Heart right ventricle (tissue), 16 donors: ENCODE measurements at regions of chr2 and their contacts with region 1.

Region 1: GRCh38 chr2:40448468-40449079 is 3.3 kb downstream of the SLC8A1 start:
- DNase-seq: no peak
- ATAC-seq: peak in 1 of 8 donors; percentile 26
- H3K4me3 ChIP-seq: no peak overlapping the region
- H3K27ac ChIP-seq: peak overlapping the region in 4 of 10 donors; percentile 3 to 87 (median 29)
- H3K4me1 ChIP-seq: peaks cover 0 to 79% (median 54%) of the 10 kb centered on the region in 9 donors
- H3K27me3 ChIP-seq: no peaks in the 10 kb centered on the region
- CTCF ChIP-seq: peak in 8 of 9 donors; percentile 22 to 68 (median 57)

Region 2: GRCh38 chr2:39975476-39976020 is 473.0 kb before region 1 on chr2:
- intact Hi-C with region 1: no loop called
- DNase-seq: no peak
- ATAC-seq: peak in 1 of 8 donors; percentile 28
- H3K4me3 ChIP-seq: no peak overlapping the region
- H3K27ac ChIP-seq: peak overlapping the region in 3 of 10 donors; percentile 1 to 35 (median 17)
- H3K4me1 ChIP-seq: peaks cover 0 to 5% (median 0%) of the 10 kb centered on the region in 9 donors
- H3K27me3 ChIP-seq: no peaks in the 10 kb centered on the region
- CTCF ChIP-seq: no peak

Region 3: GRCh38 chr2:40281021-40281940 is 167.3 kb before region 1 on chr2:
- intact Hi-C with region 1: loop called in 1 of 10 experiments (anchors 10 kb)
- DNase-seq: peak in 1 of 2 donors; percentile 58
- ATAC-seq: peak; percentile 51 to 84 (median 79)
- H3K4me3 ChIP-seq: peak overlapping the region in 2 of 10 donors; percentile 28 to 30
- H3K27ac ChIP-seq: peak overlapping the region in 9 of 10 donors; percentile 16 to 77 (median 66)
- H3K4me1 ChIP-seq: peaks cover 14 to 93% (median 68%) of the 10 kb centered on the region in 9 donors
- H3K27me3 ChIP-seq: no peaks in the 10 kb centered on the region
- CTCF ChIP-seq: no peak

Region 4: GRCh38 chr2:40488101-40488601 is 39.6 kb after region 1 on chr2:
- intact Hi-C with region 1: loop called in 1 of 10 experiments (anchors 5 kb)
- DNase-seq: no peak
- ATAC-seq: peak in 7 of 8 donors; percentile 24 to 59 (median 49)
- H3K4me3 ChIP-seq: peak overlapping the region in 8 of 10 donors; percentile 31 to 62 (median 46)
- H3K27ac ChIP-seq: peak overlapping the region in 9 of 10 donors; percentile 23 to 85 (median 75)
- H3K4me1 ChIP-seq: peaks cover 7 to 59% (median 37%) of the 10 kb centered on the region in 9 donors
- H3K27me3 ChIP-seq: no peaks in the 10 kb centered on the region
- CTCF ChIP-seq: peak; percentile 16 to 66 (median 51)

Region 5: DNA sequence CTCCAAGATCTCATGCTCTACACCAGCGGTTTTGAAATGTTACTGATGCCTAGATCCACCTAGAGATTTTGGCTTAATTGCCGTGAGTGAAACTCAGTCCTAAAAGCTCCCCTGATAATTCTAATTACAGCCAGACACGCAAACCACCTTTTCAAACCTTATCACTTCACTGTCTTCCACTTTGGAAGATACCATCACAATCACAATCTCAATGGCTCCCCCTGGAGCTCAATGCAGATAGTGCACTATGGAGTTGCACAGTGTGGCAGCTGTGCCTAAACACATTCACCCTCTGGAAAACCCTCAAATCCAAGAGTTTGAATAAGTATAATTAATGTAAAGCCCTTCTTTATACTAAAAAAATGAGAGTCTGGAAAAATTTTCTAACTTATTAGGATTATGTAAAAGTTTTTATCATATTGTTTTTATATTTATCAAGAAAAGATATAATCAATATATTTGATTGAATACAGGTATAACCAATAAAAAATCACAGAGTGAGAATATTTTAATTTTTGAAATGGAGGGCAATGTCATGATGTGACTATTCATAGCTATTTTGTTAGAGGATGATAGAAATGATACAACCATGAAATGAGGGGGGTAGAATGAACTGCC is 106.2 kb after region 1 on chr2:
- intact Hi-C with region 1: loop called in 6 of 10 experiments (anchors 5 to 10 kb)
- DNase-seq: peak; percentile 18 to 76
- ATAC-seq: peak; percentile 52 to 88 (median 81)
- H3K4me3 ChIP-seq: peak overlapping the region in 1 of 10 donors; percentile 4
- H3K27ac ChIP-seq: peak overlapping the region in 4 of 10 donors; percentile 30 to 51 (median 42)
- H3K4me1 ChIP-seq: peaks cover 0 to 14% (median 4%) of the 10 kb centered on the region in 9 donors
- H3K27me3 ChIP-seq: no peaks in the 10 kb centered on the region
- CTCF ChIP-seq: peak; percentile 58 to 96 (median 89)